ENCODE measurements at regions of chr2 and their contacts with region 1.

Region 1: DNA sequence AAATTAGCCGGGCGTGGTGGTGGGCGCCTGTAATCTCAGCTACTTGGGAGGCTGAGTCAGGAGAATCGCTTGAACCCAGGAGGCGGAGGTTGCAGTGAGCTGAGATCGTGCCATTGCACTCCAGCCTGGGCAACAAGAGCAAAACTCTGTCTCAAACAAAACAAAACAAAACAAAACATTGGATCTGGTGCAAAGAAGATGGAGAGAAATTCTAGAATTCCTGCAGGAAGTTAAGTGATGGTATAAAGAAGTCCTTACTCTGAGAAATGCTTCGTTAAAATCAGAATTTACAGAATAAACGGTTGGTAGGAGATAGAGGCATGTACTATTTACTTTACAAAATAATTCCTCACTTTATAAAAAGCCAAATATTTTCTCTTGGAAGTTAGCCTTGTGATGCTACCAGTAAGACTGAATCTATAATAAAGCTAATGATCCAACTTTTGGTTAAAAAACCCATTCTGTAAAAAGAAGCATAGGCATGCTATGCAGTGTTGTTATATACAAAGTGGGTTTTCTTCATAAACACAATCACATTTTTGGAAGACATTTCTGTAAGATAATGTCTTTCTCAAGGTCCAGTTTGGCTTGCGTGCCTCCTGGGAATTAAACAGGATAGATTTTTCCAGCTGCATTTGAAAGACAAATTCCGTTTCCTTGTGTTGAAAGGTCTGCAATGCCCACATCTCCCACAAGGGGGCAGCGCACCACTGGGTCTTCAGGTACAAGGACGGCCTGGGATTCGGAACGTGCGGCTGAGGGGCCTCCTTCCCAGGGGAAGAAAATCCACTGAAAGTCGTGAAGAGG is 35.6 kb upstream of the PNO1 start:
- DNase-seq: peak; percentile 45 to 80 (median 71)
- H3K4me3 ChIP-seq: no peak overlapping the region
- H3K4me3 Mint-ChIP-seq: peak overlapping the region in 2 of 7 donors; percentile 35 to 39
- H3K27ac ChIP-seq: no peak overlapping the region
- H3K27ac Mint-ChIP-seq: peak overlapping the region in 1 of 8 donors; percentile 23
- H3K4me1 ChIP-seq: peaks cover 8% of the 10 kb centered on the region
- H3K4me1 Mint-ChIP-seq: peaks cover 5 to 15% (median 10%) of the 10 kb centered on the region in 3 donors
- H3K27me3 ChIP-seq: no peaks in the 10 kb centered on the region
- H3K27me3 Mint-ChIP-seq: peaks cover 5% of the 10 kb centered on the region in 2 donors

Region 2: GRCh38 chr2:68031542-68032160 is 90.4 kb before region 1 on chr2:
- CTCF ChIA-PET with region 1: no interaction called
- POLR2A ChIA-PET with region 1: no interaction called
- DNase-seq: peak in 2 of 5 donors; percentile 6 to 11
- H3K4me3 ChIP-seq: no peak overlapping the region
- H3K4me3 Mint-ChIP-seq: no peak overlapping the region
- H3K27ac ChIP-seq: no peak overlapping the region
- H3K27ac Mint-ChIP-seq: no peak overlapping the region
- H3K4me1 ChIP-seq: no peaks in the 10 kb centered on the region
- H3K4me1 Mint-ChIP-seq: no peaks in the 10 kb centered on the region
- H3K27me3 ChIP-seq: no peaks in the 10 kb centered on the region
- H3K27me3 Mint-ChIP-seq: peaks cover 0 to 13% of the 10 kb centered on the region in 2 donors

Region 3: DNA sequence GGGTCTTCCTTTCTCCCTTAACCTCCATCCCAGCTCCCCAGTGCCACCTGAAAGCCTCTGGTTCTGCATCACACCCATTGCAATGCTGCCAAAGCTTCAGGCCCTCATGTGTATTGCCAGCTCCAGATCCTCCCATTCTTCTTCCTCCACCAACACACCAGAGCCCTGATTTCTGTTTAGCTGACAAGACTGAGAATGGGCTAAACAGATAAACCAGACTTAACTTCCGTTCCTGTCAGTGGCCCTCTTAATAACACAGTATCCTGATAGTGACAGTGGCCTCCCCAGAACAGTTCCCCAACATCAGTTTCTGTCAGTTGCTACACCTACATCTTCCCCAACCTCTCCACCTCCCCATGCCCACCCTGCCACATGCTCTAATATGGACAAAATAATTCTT is 28.0 kb before region 1 on chr2:
- CTCF ChIA-PET with region 1: no interaction called
- POLR2A ChIA-PET with region 1: no interaction called
- DNase-seq: no peak
- H3K4me3 ChIP-seq: no peak overlapping the region
- H3K4me3 Mint-ChIP-seq: no peak overlapping the region
- H3K27ac ChIP-seq: no peak overlapping the region
- H3K27ac Mint-ChIP-seq: no peak overlapping the region
- H3K4me1 ChIP-seq: no peaks in the 10 kb centered on the region
- H3K4me1 Mint-ChIP-seq: peaks cover 9 to 11% (median 10%) of the 10 kb centered on the region in 3 donors
- H3K27me3 ChIP-seq: no peaks in the 10 kb centered on the region
- H3K27me3 Mint-ChIP-seq: peaks cover 5 to 9% of the 10 kb centered on the region in 2 donors

Region 4: GRCh38 chr2:68169297-68169696 is 47.2 kb after region 1 on chr2:
- CTCF ChIA-PET with region 1: no interaction called
- POLR2A ChIA-PET with region 1: no interaction called
- DNase-seq: no peak
- H3K4me3 ChIP-seq: no peak overlapping the region
- H3K4me3 Mint-ChIP-seq: no peak overlapping the region
- H3K27ac ChIP-seq: no peak overlapping the region
- H3K27ac Mint-ChIP-seq: no peak overlapping the region
- H3K4me1 ChIP-seq: no peaks in the 10 kb centered on the region
- H3K4me1 Mint-ChIP-seq: peaks cover 19 to 35% (median 28%) of the 10 kb centered on the region in 3 donors
- H3K27me3 ChIP-seq: no peaks in the 10 kb centered on the region
- H3K27me3 Mint-ChIP-seq: no peaks in the 10 kb centered on the region

Region 5: DNA sequence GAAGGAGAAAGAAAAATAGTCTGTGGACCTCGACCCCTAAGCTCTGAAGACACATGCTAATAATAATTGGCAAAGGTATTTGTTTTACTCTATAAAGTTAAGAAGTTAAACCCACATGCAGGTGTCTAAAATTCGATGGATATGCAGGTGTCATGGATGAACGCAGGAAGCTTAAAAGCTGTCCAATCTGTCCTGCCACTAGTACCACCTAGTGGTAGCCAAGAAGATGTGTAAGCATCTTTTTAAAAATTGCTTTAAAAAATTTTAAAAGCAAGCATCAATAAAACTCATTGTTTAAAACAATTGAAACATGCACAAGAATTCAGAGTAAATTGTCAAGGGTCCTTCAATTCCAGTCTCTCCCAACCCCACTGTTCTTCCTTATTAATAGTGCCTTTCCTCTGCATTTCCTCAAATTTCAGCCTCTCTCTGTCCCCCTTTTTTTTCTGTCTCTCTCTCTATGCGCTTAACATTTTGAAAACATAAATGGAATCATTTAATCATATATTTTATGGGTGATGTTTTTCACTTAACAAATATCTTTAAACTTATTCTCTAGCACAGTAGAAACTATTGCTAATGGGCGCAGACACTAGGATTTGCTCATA is 160.8 kb after region 1 on chr2:
- CTCF ChIA-PET with region 1: interaction called, 53 read pairs
- POLR2A ChIA-PET with region 1: no interaction called
- DNase-seq: peak in 3 of 5 donors; percentile 2 to 40 (median 40)
- H3K4me3 ChIP-seq: no peak overlapping the region
- H3K4me3 Mint-ChIP-seq: no peak overlapping the region
- H3K27ac ChIP-seq: no peak overlapping the region
- H3K27ac Mint-ChIP-seq: no peak overlapping the region
- H3K4me1 ChIP-seq: peaks cover 4% of the 10 kb centered on the region
- H3K4me1 Mint-ChIP-seq: peaks cover 0 to 7% (median 0%) of the 10 kb centered on the region in 3 donors
- H3K27me3 ChIP-seq: no peaks in the 10 kb centered on the region
- H3K27me3 Mint-ChIP-seq: peaks cover 11 to 27% of the 10 kb centered on the region in 2 donors